ENCODE measurements at regions of chr12 and their contacts with region 1.

Region 1: GRCh38 chr12:668090-668481 is 4.8 kb upstream of the NINJ2 start:
- DNase-seq: no peak
- H3K4me3 Mint-ChIP-seq: no peak overlapping the region
- H3K27ac Mint-ChIP-seq: peak overlapping the region; percentile 85
- H3K4me1 Mint-ChIP-seq: peaks cover 72% of the 10 kb centered on the region
- H3K27me3 Mint-ChIP-seq: peaks cover 6% of the 10 kb centered on the region

Region 2: DNA sequence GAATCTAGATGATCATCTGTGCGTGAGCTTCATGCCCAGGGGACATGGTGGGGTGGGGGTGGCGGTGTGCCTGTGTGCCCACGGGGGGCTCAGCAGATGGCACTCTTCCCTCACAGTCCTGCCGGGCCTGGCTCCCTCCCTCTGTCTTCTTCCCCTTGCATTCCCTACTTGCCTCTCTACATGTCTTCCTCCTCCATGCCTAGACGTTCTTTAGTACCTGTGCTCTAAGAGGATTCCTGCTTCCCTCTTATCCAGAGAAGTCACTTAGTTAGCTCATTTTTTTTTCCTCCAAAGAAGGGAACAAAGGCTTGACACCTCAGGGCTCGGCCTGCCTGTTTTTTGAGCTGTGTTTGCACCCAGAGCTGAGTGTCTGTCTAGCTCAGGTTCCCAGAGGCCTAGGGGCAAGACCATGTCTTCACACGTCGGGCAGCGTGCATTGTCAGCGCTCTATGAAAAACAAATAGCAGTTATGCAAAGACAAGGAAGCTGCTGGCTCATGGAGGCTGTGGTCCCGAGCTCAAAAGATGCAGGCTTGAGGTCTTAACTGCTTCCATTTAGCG is 53.6 kb before region 1 on chr12:
- CTCF ChIA-PET with region 1: interaction called, 4 read pairs
- POLR2A ChIA-PET with region 1: no interaction called
- intact Hi-C with region 1: loop called (anchors 2 kb)
- DNase-seq: peak; percentile 59
- H3K4me3 Mint-ChIP-seq: no peak overlapping the region
- H3K27ac Mint-ChIP-seq: no peak overlapping the region
- H3K4me1 Mint-ChIP-seq: peaks cover 18% of the 10 kb centered on the region
- H3K27me3 Mint-ChIP-seq: no peaks in the 10 kb centered on the region

Region 3: GRCh38 chr12:622416-622815 is 45.7 kb before region 1 on chr12:
- CTCF ChIA-PET with region 1: no interaction called
- POLR2A ChIA-PET with region 1: no interaction called
- intact Hi-C with region 1: loop called (anchors 1 kb)
- DNase-seq: peak; percentile 40
- H3K4me3 Mint-ChIP-seq: peak overlapping the region; percentile 45
- H3K27ac Mint-ChIP-seq: peak overlapping the region; percentile 86
- H3K4me1 Mint-ChIP-seq: peaks cover 30% of the 10 kb centered on the region
- H3K27me3 Mint-ChIP-seq: no peaks in the 10 kb centered on the region

Region 4: GRCh38 chr12:685388-685787 is 17.3 kb after region 1 on chr12:
- CTCF ChIA-PET with region 1: interaction called, 7 read pairs
- POLR2A ChIA-PET with region 1: interaction called, 12 read pairs
- intact Hi-C with region 1: loop called (anchors 2 kb)
- DNase-seq: peak; percentile 92
- H3K4me3 Mint-ChIP-seq: no peak overlapping the region
- H3K27ac Mint-ChIP-seq: peak overlapping the region; percentile 77
- H3K4me1 Mint-ChIP-seq: peaks cover 36% of the 10 kb centered on the region
- H3K27me3 Mint-ChIP-seq: no peaks in the 10 kb centered on the region

Region 5: DNA sequence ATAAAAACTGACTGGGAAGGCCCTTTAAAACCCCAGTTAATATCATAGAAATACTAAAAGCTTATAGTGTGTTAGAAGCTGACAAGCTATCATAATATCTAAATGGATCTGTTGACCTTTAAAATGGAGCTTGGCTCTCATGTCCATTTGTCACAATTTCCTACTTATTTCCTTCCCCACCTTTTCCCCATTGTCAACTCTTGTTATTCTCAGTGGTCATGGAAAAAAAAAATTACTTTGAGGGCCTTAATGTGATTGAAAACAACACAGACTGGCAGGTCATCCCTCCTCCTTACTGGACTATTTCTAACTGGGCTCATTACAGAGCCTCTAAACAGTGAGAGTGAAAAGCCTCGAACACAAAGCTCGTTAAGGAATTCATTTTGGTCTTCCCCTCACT is 70.6 kb after region 1 on chr12:
- CTCF ChIA-PET with region 1: no interaction called
- POLR2A ChIA-PET with region 1: interaction called, 4 read pairs
- intact Hi-C with region 1: loop called (anchors 1 kb)
- DNase-seq: no peak
- H3K4me3 Mint-ChIP-seq: no peak overlapping the region
- H3K27ac Mint-ChIP-seq: no peak overlapping the region
- H3K4me1 Mint-ChIP-seq: peaks cover 15% of the 10 kb centered on the region
- H3K27me3 Mint-ChIP-seq: no peaks in the 10 kb centered on the region

Measured in activated CD4-positive, alpha-beta memory T cell treated with anti-CD3 and anti-CD28 coated beads for 36 hours (primary cell).